Caco-2 (cell line): ENCODE measurements at regions of chr12 and their contacts with region 1.

Region 1: GRCh38 chr12:19129486-19130223 is at the start of gene PLEKHA5:
- DNase-seq: peak; percentile 88
- H3K4me3 ChIP-seq: peak within 1 kb of the TSS; percentile 75
- H3K4me3 Mint-ChIP-seq: peak within 1 kb of the TSS; percentile 91
- H3K27ac Mint-ChIP-seq: peak within 1 kb of the TSS; percentile 63
- H3K4me1 ChIP-seq: 0 out of 2 replicates have a peak, but pooled peaks cover 13% of the 10 kb centered on the region
- H3K4me1 Mint-ChIP-seq: peaks cover 11% of the 10 kb centered on the region
- H3K27me3 ChIP-seq: no peaks in the 10 kb centered on the region
- H3K27me3 Mint-ChIP-seq: no peaks in the 10 kb centered on the region
- CTCF ChIP-seq: peak; percentile 36 to 74
- total RNA-seq, gene PLEKHA5: 69.1 and 79.2 TPM in 2 replicates

Region 2: GRCh38 chr12:18882690-18883089 is 247.0 kb before region 1 on chr12:
- CTCF ChIA-PET with region 1: no interaction called
- POLR2A ChIA-PET with region 1: no interaction called
- intact Hi-C with region 1: loop called (anchors 1 kb)
- DNase-seq: peak in 1 of 2 experiments; percentile 41
- H3K4me3 ChIP-seq: no peak overlapping the region
- H3K4me3 Mint-ChIP-seq: no peak overlapping the region
- H3K27ac Mint-ChIP-seq: no peak overlapping the region
- H3K4me1 ChIP-seq: no peaks in the 10 kb centered on the region
- H3K4me1 Mint-ChIP-seq: no peaks in the 10 kb centered on the region
- H3K27me3 ChIP-seq: no peaks in the 10 kb centered on the region
- H3K27me3 Mint-ChIP-seq: no peaks in the 10 kb centered on the region
- CTCF ChIP-seq: peak; percentile 33 to 50

Region 3: GRCh38 chr12:19048943-19049342 is 80.7 kb before region 1 on chr12:
- CTCF ChIA-PET with region 1: interaction called, 3 read pairs
- POLR2A ChIA-PET with region 1: no interaction called
- intact Hi-C with region 1: loop called (anchors 1 kb)
- DNase-seq: no peak
- H3K4me3 ChIP-seq: no peak overlapping the region
- H3K4me3 Mint-ChIP-seq: no peak overlapping the region
- H3K27ac Mint-ChIP-seq: no peak overlapping the region
- H3K4me1 ChIP-seq: peaks cover 22% of the 10 kb centered on the region
- H3K4me1 Mint-ChIP-seq: peaks cover 32% of the 10 kb centered on the region
- H3K27me3 ChIP-seq: no peaks in the 10 kb centered on the region
- H3K27me3 Mint-ChIP-seq: no peaks in the 10 kb centered on the region
- CTCF ChIP-seq: no peak

Region 4: DNA sequence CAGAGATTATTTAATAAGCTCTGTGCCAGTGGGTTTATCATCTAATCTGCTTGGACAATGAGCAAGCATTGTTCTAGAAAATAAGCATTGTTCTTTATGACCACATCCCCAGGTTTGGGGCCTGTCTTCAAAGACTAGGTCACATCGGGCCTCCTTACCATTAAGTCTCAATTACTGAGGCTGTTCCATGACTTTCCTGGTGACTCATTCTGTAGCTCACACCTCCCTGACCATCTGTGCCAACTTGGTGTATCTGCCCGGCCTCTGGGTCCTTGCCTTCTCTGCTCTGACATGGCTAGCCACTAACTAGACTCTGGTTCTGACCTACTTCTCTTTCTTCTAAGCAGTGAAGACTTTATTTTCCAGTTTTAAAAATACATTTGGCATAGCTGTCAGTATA is 44.6 kb before region 1 on chr12:
- CTCF ChIA-PET with region 1: no interaction called
- POLR2A ChIA-PET with region 1: no interaction called
- intact Hi-C with region 1: no loop called
- DNase-seq: no peak
- H3K4me3 ChIP-seq: no peak overlapping the region
- H3K4me3 Mint-ChIP-seq: no peak overlapping the region
- H3K27ac Mint-ChIP-seq: no peak overlapping the region
- H3K4me1 ChIP-seq: no peaks in the 10 kb centered on the region
- H3K4me1 Mint-ChIP-seq: peaks cover 7% of the 10 kb centered on the region
- H3K27me3 ChIP-seq: no peaks in the 10 kb centered on the region
- H3K27me3 Mint-ChIP-seq: no peaks in the 10 kb centered on the region
- CTCF ChIP-seq: no peak

Region 5: GRCh38 chr12:19095756-19096480 is 33.7 kb before region 1 on chr12:
- CTCF ChIA-PET with region 1: no interaction called
- POLR2A ChIA-PET with region 1: no interaction called
- intact Hi-C with region 1: loop called (anchors 2 kb)
- DNase-seq: peak in 1 of 2 experiments; percentile 18
- H3K4me3 ChIP-seq: peak overlapping the region; percentile 13; the same call in 1 of the 2 replicates
- H3K4me3 Mint-ChIP-seq: peak overlapping the region; percentile 34
- H3K27ac Mint-ChIP-seq: peak overlapping the region; percentile 47
- H3K4me1 ChIP-seq: peaks cover 23% of the 10 kb centered on the region
- H3K4me1 Mint-ChIP-seq: peaks cover 22% of the 10 kb centered on the region
- H3K27me3 ChIP-seq: no peaks in the 10 kb centered on the region
- H3K27me3 Mint-ChIP-seq: no peaks in the 10 kb centered on the region
- CTCF ChIP-seq: no peak

Region 6: DNA sequence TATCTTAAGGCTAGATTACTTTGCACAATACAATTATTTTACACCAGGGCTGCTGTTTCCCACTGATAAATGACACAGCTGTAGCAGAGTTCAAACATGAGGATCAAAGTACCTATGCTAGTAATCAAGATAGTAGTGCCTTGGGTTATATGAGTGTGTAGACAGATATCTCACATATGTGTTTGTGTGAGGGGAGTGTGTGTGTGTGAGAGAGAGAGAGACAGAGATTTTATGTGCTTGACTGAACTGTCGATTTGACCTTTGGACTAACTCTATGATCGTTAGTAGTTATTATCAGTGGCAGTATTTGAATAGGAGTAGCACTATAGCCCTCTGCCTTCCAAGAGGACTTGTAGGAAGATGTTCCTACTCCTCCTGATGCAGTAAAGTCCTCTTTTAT is 15.3 kb after region 1 on chr12:
- CTCF ChIA-PET with region 1: no interaction called
- POLR2A ChIA-PET with region 1: no interaction called
- intact Hi-C with region 1: loop called (anchors 1 kb)
- DNase-seq: peak; percentile 59 to 60
- H3K4me3 ChIP-seq: no peak overlapping the region
- H3K4me3 Mint-ChIP-seq: peak overlapping the region; percentile 30
- H3K27ac Mint-ChIP-seq: peak overlapping the region; percentile 28
- H3K4me1 ChIP-seq: peaks cover 32% of the 10 kb centered on the region
- H3K4me1 Mint-ChIP-seq: peaks cover 28% of the 10 kb centered on the region
- H3K27me3 ChIP-seq: no peaks in the 10 kb centered on the region
- H3K27me3 Mint-ChIP-seq: no peaks in the 10 kb centered on the region
- CTCF ChIP-seq: no peak